PC-3 (cell line): ENCODE measurements at regions of chr21 and their contacts with region 1.

Region 1: GRCh38 chr21:18369115-18369514 is 34.5 kb downstream of the TMPRSS15 start:
- DNase-seq: peak; percentile 59
- ATAC-seq: no peak
- H3K4me3 ChIP-seq: no peak overlapping the region
- H3K27ac ChIP-seq: no peak overlapping the region
- H3K4me1 ChIP-seq: no peaks in the 10 kb centered on the region
- H3K27me3 ChIP-seq: peaks cover 19% of the 10 kb centered on the region; the same call in 1 of the 2 replicates
- CTCF ChIP-seq: peak; percentile 60

Region 2: GRCh38 chr21:18298228-18298627 is 70.9 kb before region 1 on chr21:
- CTCF ChIA-PET with region 1: interaction called, 4 read pairs
- POLR2A ChIA-PET with region 1: interaction called, 4 read pairs
- intact Hi-C with region 1: loop called (anchors 1 kb)
- DNase-seq: no peak
- ATAC-seq: no peak
- H3K4me3 ChIP-seq: no peak overlapping the region
- H3K27ac ChIP-seq: no peak overlapping the region
- H3K4me1 ChIP-seq: no peaks in the 10 kb centered on the region
- H3K27me3 ChIP-seq: peaks cover 64% of the 10 kb centered on the region
- CTCF ChIP-seq: no peak